Activated T-helper 1 cell treated with anti-CD3 and anti-CD28 coated beads, Interleukin-12 subunit alpha, Interleukin-12 subunit beta, Interleukin-2, Interleukin-4 antibody, amounts not matched to agents 30 ng/mL and 10 ng/mL and 1 ng/mL, durations not matched to agents 14 hours and 24 hours and 36 hours (primary cell): ENCODE measurements at regions of chr2 and their contacts with region 1.

Region 1: DNA sequence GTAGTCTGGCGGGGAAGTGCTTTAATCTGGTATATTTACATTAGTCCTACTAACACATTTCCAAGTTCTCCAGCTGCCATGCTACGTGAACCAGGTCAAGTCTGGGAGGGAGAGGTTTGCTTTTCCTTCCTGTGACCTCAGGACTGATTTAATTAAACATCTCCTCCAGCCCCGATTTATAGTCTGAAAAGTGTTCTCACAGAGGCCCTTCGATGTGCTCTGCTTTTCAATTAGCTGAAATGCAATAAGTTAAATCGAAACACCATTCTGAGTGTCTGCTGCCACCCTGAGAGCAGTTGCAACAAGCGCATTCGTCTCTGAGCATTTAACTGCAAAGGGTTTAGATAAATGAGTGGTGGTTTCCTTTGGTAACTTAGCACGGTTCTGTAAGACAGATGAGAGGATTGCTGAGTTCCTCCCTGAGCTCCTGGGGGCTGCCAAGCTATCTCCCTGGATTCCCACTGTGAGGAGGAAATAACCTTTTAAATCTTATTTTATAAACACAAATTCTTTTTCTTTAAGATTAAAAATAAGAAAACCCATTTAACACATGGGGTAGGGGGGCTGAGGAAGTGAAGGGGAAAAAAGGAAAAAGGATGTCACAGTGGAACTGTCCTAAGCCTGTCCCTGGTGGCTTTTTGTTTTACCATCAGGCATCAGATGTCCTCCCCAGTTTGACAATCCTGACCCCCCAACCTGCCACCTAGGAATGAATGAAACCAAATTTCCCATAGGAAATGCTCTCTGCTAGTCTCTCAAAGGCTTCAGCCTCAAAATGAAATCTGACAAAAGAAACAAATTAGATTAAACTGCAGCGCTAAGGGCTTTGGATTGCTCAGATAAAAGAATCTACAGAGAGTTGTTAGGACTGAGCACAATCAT is 56.5 kb upstream of the CREB1 start:
- DNase-seq: peak; percentile 47
- H3K4me3 Mint-ChIP-seq: no peak overlapping the region
- H3K27ac Mint-ChIP-seq: no peak overlapping the region
- H3K4me1 Mint-ChIP-seq: peaks cover 26% of the 10 kb centered on the region
- H3K27me3 Mint-ChIP-seq: no peaks in the 10 kb centered on the region

Region 2: GRCh38 chr2:206780671-206781070 is 692.6 kb before region 1 on chr2:
- intact Hi-C with region 1: loop called (anchors 1 kb)
- DNase-seq: no peak
- H3K4me3 Mint-ChIP-seq: no peak overlapping the region
- H3K27ac Mint-ChIP-seq: no peak overlapping the region
- H3K4me1 Mint-ChIP-seq: no peaks in the 10 kb centered on the region
- H3K27me3 Mint-ChIP-seq: no peaks in the 10 kb centered on the region

Region 3: GRCh38 chr2:207046724-207047123 is 426.6 kb before region 1 on chr2:
- intact Hi-C with region 1: loop called (anchors 1 kb)
- DNase-seq: peak; percentile 6
- H3K4me3 Mint-ChIP-seq: no peak overlapping the region
- H3K27ac Mint-ChIP-seq: no peak overlapping the region
- H3K4me1 Mint-ChIP-seq: peaks cover 15% of the 10 kb centered on the region
- H3K27me3 Mint-ChIP-seq: peaks cover 2% of the 10 kb centered on the region

Region 4: GRCh38 chr2:207133820-207134519 is 339.3 kb before region 1 on chr2:
- intact Hi-C with region 1: no loop called
- DNase-seq: no peak
- H3K4me3 Mint-ChIP-seq: no peak overlapping the region
- H3K27ac Mint-ChIP-seq: no peak overlapping the region
- H3K4me1 Mint-ChIP-seq: peaks cover 49% of the 10 kb centered on the region
- H3K27me3 Mint-ChIP-seq: no peaks in the 10 kb centered on the region

Region 5: DNA sequence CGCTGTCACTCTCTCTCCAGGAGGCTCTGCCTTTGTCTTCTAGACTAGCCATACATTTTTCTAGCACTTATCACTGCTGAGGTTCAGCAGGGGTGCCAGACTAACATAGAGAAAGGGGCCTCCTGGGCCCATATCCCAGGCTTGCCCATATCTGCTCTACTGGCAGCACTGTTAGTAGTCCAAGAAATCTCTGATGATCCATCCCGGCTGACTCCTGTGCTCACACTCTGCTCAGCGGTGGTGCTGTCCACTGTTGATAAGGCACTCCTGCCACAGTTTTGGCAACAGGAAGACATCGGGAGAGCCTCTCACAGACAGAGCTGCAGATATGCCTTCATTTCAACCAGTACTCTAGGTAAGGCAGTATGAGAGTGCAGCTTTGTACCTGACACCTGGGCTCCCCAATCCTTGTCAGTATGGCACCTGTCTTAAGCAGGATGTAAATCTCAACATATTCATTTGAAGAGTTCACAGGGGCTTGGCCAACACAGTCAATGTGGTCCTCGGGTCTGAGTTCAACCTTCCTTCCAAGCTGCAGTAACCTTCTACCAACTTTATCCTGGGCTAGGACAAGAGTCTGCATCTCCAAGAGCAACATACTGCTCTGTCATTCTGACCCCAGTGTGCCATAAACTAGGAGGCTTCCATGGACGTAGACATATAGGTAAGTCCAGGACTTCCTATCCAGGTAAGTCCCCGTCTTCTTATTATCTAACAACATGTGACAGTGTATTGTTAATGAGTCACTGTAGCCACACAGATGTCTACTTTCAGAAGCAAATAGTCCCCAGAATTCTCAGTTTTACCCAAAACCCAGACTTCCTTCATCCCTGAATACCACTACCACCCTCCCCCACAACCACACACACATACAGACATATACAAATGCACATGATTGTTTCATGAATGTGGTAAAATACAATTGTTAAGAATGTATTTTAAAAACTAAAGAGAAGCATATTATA is 323.8 kb before region 1 on chr2:
- intact Hi-C with region 1: no loop called
- DNase-seq: no peak
- H3K4me3 Mint-ChIP-seq: no peak overlapping the region
- H3K27ac Mint-ChIP-seq: no peak overlapping the region
- H3K4me1 Mint-ChIP-seq: peaks cover 75% of the 10 kb centered on the region
- H3K27me3 Mint-ChIP-seq: peaks cover 6% of the 10 kb centered on the region

Region 6: DNA sequence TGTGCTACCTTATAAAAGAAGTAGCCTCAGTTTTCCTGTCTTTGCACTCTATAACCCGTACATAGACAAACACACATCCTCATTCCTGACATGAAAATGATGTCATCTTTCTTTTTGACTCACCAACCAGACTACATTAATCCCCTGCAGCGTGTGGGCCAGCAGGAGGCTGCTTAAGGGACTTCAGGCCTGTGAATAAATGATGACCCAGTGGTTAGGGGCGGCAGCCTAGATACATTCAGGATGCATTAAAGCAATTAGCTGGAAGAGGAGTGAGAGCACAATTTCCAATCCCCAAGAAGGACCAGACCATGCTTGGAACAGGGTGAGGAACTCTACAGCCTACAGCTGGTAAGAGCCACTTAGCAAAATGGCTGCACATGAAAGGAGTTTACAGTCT is 250.2 kb before region 1 on chr2:
- intact Hi-C with region 1: loop called (anchors 5 kb)
- DNase-seq: no peak
- H3K4me3 Mint-ChIP-seq: peak overlapping the region; percentile 60
- H3K27ac Mint-ChIP-seq: peak overlapping the region; percentile 84
- H3K4me1 Mint-ChIP-seq: peaks cover 46% of the 10 kb centered on the region
- H3K27me3 Mint-ChIP-seq: peaks cover 6% of the 10 kb centered on the region

Region 7: DNA sequence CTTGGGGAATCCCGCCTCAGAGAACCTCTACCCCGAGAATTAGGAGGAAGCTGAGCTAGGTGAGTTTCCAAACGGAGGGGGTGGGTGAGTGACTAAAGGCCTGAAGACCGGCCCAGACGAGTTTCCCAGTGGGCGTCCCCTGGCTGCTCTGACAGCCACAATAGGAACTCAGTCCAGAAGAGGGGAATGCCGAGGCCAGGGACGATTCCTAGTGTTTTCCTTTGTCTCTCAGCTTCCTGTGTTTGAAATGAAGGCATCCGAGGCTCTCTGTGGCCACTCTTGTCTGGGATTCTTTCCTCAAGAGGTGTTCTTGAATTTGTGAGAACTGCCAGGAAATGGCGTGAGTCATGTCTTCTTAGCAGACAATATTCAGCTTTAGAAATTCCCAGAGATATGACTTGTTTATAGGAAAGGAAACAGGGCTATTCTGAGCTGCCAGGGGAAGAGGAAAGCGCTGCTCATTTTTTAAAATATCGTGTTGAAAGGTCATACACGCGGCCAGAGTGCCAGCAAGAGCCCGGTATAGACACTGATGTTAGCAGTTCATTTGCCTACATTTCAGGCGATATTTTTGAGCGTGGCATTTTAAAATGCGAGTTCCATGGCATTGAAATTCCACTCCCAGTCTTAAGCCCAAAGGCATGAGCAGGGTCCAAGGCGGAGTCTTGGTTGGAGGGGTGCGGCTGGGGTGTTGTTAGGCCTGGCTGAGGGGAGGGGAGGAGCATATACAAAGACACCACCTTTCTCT is 138.5 kb before region 1 on chr2:
- intact Hi-C with region 1: loop called (anchors 5 kb)
- DNase-seq: no peak
- H3K4me3 Mint-ChIP-seq: peak overlapping the region; percentile 28
- H3K27ac Mint-ChIP-seq: peak overlapping the region; percentile 88
- H3K4me1 Mint-ChIP-seq: peaks cover 82% of the 10 kb centered on the region
- H3K27me3 Mint-ChIP-seq: no peaks in the 10 kb centered on the region